Aorta (tissue), 5 donors: ENCODE measurements at regions of chr4 and their contacts with region 1.

Region 1: DNA sequence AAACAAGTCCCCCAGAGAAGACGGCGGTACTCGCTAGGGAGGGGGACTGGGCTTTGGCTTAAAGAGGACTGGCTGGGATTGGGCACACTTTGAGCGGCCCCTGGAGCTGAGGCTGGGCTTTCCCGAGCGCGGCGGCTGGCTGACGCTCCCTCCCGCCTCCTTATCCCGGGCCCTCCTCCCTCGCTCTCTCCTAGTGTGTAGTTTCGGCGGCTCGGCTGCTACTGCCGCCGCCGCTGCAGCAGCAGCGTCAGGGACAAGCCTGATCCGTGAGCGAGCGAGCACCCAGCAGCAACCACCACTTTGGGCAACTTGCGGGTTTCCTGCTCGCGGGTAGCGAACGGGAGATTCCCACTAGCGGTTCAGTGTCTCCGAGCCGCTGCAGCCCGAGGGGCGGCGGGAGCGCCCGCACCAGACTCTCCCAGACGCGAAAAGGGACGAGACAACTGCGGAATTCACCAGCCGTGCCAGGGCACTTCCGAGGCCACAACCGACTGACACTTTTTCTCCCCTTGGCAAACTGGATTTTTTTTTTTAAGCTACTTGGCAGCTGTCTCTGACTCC is 629 bp upstream of the PCDH7 start:
- DNase-seq: peak; percentile 88 to 92
- ATAC-seq: peak; percentile 79
- H3K4me3 ChIP-seq: peak overlapping the region; percentile 92 to 95
- H3K27ac ChIP-seq: peak overlapping the region; percentile 65 to 85
- H3K4me1 ChIP-seq: no peaks in the 10 kb centered on the region
- H3K27me3 ChIP-seq: no peaks in the 10 kb centered on the region

Region 2: DNA sequence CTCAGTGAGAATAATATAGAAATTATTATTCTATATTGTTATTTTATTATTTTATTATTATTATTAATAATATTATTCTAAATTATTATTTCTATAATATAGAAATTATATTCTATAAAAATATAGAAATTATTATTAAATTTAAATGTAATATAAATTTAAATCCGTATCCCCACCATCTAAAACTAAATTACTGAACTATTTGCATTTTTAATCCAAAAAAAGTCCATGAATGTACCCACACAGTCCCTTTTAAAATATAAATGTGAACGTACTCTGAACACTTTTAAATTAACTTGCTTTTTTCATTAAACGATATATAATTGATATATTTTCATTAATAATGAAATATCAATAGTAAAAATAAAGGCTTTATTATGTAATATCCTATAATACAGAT is 247.7 kb before region 1 on chr4:
- intact Hi-C with region 1: no loop called
- DNase-seq: no peak
- ATAC-seq: no peak
- H3K4me3 ChIP-seq: no peak overlapping the region
- H3K27ac ChIP-seq: no peak overlapping the region
- H3K4me1 ChIP-seq: no peaks in the 10 kb centered on the region
- H3K27me3 ChIP-seq: no peaks in the 10 kb centered on the region

Region 3: DNA sequence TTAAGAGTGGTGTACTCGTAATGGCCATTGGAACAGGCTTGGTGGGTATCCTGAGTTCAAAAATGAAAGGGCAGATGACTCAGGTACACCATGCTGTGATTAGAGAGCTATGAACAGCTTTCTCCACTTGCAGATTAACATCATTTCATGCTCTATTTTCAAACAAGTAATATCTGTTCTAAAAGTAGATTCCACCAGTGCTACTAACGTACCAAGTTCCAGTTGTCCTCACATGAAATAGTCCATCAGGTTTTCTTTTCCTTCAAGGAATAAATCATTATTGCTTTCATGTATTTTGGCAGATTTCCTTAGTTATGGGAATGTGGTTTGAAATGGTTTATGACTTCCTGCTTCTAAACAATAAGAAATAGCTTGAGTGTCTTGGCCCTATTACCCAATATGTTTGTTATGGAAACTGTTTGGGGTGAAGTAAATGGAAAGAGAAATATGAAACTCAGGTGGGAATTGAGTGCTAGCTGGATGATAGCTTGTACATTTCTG is 50.6 kb after region 1 on chr4:
- intact Hi-C with region 1: loop called in 1 of 2 experiments (anchors 10 kb)
- DNase-seq: no peak
- ATAC-seq: no peak
- H3K4me3 ChIP-seq: no peak overlapping the region
- H3K27ac ChIP-seq: no peak overlapping the region
- H3K4me1 ChIP-seq: peaks cover 0 to 11% of the 10 kb centered on the region in 2 donors
- H3K27me3 ChIP-seq: no peaks in the 10 kb centered on the region

Region 4: GRCh38 chr4:30839583-30840520 is 120.3 kb after region 1 on chr4:
- intact Hi-C with region 1: loop called in 1 of 2 experiments (anchors 10 kb)
- DNase-seq: peak in 1 of 2 donors; percentile 48
- ATAC-seq: peak; percentile 68
- H3K4me3 ChIP-seq: no peak overlapping the region
- H3K27ac ChIP-seq: peak overlapping the region in 1 of 2 donors; percentile 25
- H3K4me1 ChIP-seq: peaks cover 2 to 5% of the 10 kb centered on the region in 2 donors
- H3K27me3 ChIP-seq: no peaks in the 10 kb centered on the region

Region 5: DNA sequence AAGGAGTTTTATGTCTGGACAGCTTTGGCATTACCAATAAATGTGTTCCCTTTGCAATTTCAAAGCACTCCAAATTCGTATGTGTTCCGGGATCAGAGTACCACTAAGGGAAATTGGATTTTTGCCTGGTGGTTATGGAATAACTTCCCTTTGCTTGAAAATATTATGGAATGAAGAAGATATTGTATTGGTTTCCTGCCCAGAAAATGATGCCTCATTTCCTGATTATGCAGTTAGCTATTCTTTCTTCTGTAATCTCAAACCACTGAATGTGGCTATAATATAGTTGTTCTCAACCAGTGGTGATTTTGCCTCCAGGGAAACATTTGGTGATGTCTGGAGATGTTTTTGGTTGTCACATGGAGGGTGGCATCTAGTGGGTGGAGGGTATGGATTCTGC is 143.5 kb after region 1 on chr4:
- intact Hi-C with region 1: loop called in 1 of 2 experiments (anchors 10 kb)
- DNase-seq: no peak
- ATAC-seq: no peak
- H3K4me3 ChIP-seq: no peak overlapping the region
- H3K27ac ChIP-seq: peak overlapping the region in 1 of 2 donors; percentile 52
- H3K4me1 ChIP-seq: peaks cover 0 to 8% of the 10 kb centered on the region in 2 donors
- H3K27me3 ChIP-seq: no peaks in the 10 kb centered on the region

Region 6: GRCh38 chr4:30948653-30949052 is 229.1 kb after region 1 on chr4:
- intact Hi-C with region 1: loop called in 1 of 2 experiments (anchors 5 kb)
- DNase-seq: no peak
- ATAC-seq: no peak
- H3K4me3 ChIP-seq: no peak overlapping the region
- H3K27ac ChIP-seq: no peak overlapping the region
- H3K4me1 ChIP-seq: peaks cover 0 to 3% of the 10 kb centered on the region in 2 donors
- H3K27me3 ChIP-seq: no peaks in the 10 kb centered on the region

Region 7: DNA sequence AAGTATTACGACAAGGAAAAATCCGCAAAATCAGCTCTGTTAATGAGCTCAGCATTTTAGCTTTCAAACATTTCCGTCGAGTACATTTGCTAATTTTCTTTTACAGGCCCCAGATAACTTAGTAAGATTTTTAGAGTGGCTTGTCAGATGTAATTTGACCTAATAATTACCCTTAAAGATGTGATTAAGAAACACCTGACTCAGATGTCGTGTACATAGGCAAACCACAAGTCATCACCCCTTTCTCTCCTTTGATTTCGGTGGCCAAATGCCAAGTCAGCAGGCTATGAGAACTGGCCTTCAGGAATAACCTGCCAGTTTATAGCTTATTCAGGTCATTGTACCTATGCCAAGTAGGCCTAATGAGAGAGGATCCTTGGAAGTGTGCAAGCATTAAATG is 370.3 kb after region 1 on chr4:
- intact Hi-C with region 1: loop called (anchors 5 to 10 kb)
- DNase-seq: no peak
- ATAC-seq: no peak
- H3K4me3 ChIP-seq: no peak overlapping the region
- H3K27ac ChIP-seq: peak overlapping the region; percentile 82 to 92
- H3K4me1 ChIP-seq: peaks cover 3 to 4% of the 10 kb centered on the region in 2 donors
- H3K27me3 ChIP-seq: no peaks in the 10 kb centered on the region